Activated CD8-positive, alpha-beta T cell treated with anti-CD3 and anti-CD28 coated beads, Interleukin-2, amount 10 ng/mL, durations not matched to agents 7 days and 5 days (primary cell): ENCODE measurements at regions of chr4 and their contacts with region 1.

Region 1: GRCh38 chr4:75995727-75996126 is 5.0 kb upstream of the SDAD1 start:
- DNase-seq: no peak
- ATAC-seq: no peak
- H3K4me3 Mint-ChIP-seq: no peak overlapping the region
- H3K27ac Mint-ChIP-seq: no peak overlapping the region
- H3K4me1 Mint-ChIP-seq: peaks cover 6% of the 10 kb centered on the region
- H3K27me3 Mint-ChIP-seq: peaks cover 14% of the 10 kb centered on the region

Region 2: GRCh38 chr4:75916091-75916661 is 79.6 kb before region 1 on chr4:
- CTCF ChIA-PET with region 1: interaction called, 17 read pairs
- POLR2A ChIA-PET with region 1: no interaction called
- DNase-seq: peak; percentile 50
- ATAC-seq: peak; percentile 76
- H3K4me3 Mint-ChIP-seq: no peak overlapping the region
- H3K27ac Mint-ChIP-seq: no peak overlapping the region
- H3K4me1 Mint-ChIP-seq: peaks cover 2% of the 10 kb centered on the region
- H3K27me3 Mint-ChIP-seq: no peaks in the 10 kb centered on the region

Region 3: DNA sequence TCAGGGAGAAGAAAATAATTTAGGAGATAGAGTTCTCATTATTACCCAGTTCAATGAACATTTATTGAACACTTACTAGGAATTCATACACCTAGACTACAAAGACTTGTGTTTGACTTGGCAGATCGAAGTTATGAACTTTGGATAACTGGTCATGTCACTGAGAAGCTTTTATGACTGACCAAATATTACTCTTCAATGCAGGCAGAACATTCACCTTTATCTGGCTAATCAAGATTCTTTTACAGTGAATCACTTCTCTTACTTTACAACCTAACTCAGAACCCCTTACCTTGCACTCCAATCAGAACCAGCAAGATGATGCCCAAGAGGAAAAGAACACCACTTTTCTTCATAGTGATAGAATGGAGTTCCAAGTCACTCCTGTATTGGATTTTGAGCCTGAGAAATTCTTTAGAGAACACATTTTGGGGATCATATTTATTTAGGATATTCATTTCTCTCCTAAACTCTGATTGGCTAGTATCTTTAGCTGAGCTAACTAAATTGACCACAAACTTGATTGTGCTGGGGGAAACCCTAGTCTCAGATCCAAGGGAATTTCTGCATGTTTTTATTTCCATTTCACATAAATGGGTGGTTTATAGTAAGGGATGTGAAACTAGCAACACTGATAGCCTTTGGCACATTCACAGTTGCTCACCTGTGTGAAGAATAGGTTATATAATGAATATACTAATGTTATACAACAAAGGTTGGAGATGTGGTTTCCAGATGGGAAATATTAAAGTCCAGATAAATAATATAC is 11.6 kb after region 1 on chr4 and contains the start of gene CXCL9:
- CTCF ChIA-PET with region 1: interaction called, 11 read pairs
- POLR2A ChIA-PET with region 1: no interaction called
- DNase-seq: no peak
- ATAC-seq: no peak
- H3K4me3 Mint-ChIP-seq: no peak within 1 kb of the TSS
- H3K27ac Mint-ChIP-seq: no peak within 1 kb of the TSS
- H3K4me1 Mint-ChIP-seq: peaks cover 3% of the 10 kb centered on the region
- H3K27me3 Mint-ChIP-seq: peaks cover 28% of the 10 kb centered on the region
- total RNA-seq, gene CXCL9: not detected

Region 4: GRCh38 chr4:76055016-76055415 is 59.3 kb after region 1 on chr4:
- CTCF ChIA-PET with region 1: interaction called, 26 read pairs
- POLR2A ChIA-PET with region 1: interaction called, 3 read pairs
- DNase-seq: no peak
- ATAC-seq: peak; percentile 39
- H3K4me3 Mint-ChIP-seq: no peak overlapping the region
- H3K27ac Mint-ChIP-seq: peak overlapping the region; percentile 13
- H3K4me1 Mint-ChIP-seq: peaks cover 22% of the 10 kb centered on the region
- H3K27me3 Mint-ChIP-seq: peaks cover 2% of the 10 kb centered on the region

Region 5: DNA sequence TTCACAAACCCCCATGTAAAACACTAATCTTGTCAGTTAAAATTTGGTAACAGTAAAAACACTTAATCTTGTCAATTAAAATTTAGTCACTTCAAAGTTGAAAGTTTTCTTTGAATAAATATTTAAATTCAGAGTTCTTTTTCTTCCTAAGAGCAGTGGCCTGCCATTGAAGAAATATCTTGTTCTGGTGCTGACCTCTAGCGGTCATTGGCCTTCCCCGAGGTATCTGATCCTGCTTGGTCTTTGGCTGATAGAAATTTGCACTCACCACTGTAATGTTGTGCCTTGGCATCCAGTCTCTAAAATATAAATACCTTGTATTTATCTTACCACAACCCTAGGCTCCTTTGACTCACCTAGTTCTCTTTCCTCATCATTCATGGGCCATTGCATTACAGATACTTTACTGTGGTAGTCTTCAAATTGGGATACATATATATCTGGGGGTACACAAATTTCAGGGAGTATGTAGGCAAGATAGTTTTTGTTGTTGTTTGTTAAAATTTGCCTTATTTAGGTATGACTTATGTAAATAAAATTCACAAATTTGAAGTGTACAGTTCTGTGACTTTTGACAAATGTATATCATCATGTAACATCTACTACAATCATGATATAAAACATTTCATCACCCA is 72.0 kb after region 1 on chr4:
- CTCF ChIA-PET with region 1: interaction called, 39 read pairs
- POLR2A ChIA-PET with region 1: no interaction called
- DNase-seq: peak; percentile 84
- ATAC-seq: peak; percentile 90
- H3K4me3 Mint-ChIP-seq: no peak overlapping the region
- H3K27ac Mint-ChIP-seq: no peak overlapping the region
- H3K4me1 Mint-ChIP-seq: no peaks in the 10 kb centered on the region
- H3K27me3 Mint-ChIP-seq: no peaks in the 10 kb centered on the region